Activated T-helper 2 cell treated with anti-CD3 and anti-CD28 coated beads, Interferon-gamma antibody, Interleukin-2, Interleukin-4, amounts not matched to agents 10 μg/mL and 5 μg/mL and 100 μg/mL, durations not matched to agents 14 hours and 24 hours and 36 hours (primary cell): ENCODE measurements at regions of chr2 and their contacts with region 1.

Region 1: DNA sequence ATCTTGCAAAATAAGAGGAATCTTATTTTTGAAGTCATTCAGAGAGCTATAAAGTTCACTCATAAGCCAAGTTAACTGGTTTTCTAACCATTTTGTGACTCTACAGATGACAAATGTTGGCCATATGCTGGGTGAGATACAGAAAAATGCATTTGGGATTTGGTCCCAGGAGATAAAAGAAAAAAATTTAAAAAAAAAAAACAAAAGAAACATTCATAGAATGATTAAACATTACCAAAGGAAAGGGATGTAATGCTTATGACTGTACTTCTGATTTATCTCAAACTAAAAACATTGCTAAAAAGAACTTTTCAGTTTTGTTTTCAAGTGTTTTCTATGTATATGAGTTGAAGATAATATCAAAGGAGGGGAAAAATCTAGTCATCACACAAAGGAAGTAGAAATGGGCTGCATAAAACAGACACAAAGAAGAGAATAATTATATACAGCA is 43.1 kb downstream of the PELI1 start:
- DNase-seq: no peak
- H3K4me3 Mint-ChIP-seq: peak overlapping the region; percentile 27
- H3K27ac Mint-ChIP-seq: peak overlapping the region; percentile 89
- H3K4me1 Mint-ChIP-seq: peaks cover 44% of the 10 kb centered on the region
- H3K27me3 Mint-ChIP-seq: no peaks in the 10 kb centered on the region

Region 2: DNA sequence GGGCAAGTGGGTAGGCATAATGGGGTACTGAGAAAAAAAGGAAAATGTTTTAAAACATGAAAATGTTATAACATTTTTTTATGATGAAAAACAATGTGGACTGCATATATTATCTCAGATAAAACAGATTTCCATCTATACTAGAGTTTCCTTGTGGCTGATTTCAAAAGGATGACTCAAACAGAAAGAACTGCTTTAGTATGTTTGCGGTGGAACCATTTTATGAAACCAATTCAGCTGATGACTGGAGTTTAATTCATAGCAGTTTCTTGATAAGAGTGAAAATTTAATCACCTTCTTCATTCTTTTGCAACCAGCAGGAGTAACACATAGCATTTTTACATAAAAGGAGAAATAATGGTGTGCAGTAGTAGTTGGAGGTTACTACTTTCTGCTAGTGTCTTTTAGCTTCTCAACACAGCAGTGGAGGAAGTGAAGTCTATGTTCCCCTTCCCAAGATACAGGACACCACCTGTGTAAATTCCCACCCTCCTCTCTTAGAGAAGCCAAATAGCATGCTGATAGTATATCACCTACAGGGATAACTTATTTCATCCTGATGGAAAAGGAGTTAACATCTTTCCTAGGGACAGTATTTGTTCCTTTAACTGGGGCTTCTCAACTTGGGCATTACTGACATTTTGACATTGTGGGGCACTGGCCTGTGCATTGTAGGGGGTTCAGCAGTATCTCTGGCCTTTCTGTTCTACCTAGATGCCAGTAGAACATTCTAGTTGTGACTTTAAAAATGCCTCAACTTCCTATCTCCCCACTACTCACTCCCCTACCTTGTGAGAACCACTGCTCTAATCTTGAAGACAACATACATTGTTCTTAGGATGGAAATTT is 13.1 kb after region 1 on chr2:
- intact Hi-C with region 1: loop called (anchors 1 kb)
- DNase-seq: no peak
- H3K4me3 Mint-ChIP-seq: peak overlapping the region; percentile 6
- H3K27ac Mint-ChIP-seq: peak overlapping the region; percentile 74
- H3K4me1 Mint-ChIP-seq: peaks cover 55% of the 10 kb centered on the region
- H3K27me3 Mint-ChIP-seq: peaks cover 2% of the 10 kb centered on the region

Region 3: DNA sequence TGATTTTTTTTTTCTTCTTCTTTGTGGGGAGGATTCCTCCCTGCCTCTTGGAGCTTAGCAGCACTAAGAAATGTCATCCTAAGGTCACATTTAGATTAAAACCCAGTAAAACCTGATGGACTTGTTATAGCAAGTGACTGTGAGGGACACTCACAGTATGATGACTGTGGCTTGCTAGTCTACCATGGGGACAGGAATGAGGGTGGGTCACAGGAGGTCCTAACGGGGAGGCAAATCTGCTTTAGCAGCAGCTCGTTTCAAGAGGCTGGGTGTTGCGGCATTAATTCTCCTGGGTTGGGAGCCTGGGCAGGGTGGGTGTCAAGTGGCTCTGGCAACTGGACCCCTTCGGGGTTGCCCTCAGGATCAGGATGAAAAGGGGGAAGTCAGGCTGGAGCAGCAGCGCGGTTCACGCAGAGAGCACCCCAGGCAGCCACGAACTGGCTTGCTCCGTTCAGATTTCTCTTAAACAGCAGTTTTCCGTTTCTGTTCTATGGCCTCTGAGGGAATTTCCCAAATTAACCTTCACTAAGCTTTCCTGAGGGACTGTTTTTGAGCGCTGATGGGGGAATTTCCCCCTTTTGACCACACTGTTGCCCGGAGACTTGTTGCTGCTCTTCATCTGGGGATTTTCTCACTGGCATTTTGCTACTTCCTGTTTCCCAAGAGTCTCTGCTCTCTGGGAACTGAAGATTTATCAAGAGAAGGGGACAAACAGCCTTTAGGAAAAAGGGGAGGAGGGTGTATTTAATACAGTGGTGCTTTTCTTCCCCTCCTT is 102.9 kb after region 1 on chr2:
- intact Hi-C with region 1: loop called (anchors 2 kb)
- DNase-seq: no peak
- H3K4me3 Mint-ChIP-seq: peak overlapping the region; percentile 42
- H3K27ac Mint-ChIP-seq: peak overlapping the region; percentile 78
- H3K4me1 Mint-ChIP-seq: peaks cover 50% of the 10 kb centered on the region
- H3K27me3 Mint-ChIP-seq: no peaks in the 10 kb centered on the region